ENCODE measurements at regions of chr6 and their contacts with region 1.

Region 1: DNA sequence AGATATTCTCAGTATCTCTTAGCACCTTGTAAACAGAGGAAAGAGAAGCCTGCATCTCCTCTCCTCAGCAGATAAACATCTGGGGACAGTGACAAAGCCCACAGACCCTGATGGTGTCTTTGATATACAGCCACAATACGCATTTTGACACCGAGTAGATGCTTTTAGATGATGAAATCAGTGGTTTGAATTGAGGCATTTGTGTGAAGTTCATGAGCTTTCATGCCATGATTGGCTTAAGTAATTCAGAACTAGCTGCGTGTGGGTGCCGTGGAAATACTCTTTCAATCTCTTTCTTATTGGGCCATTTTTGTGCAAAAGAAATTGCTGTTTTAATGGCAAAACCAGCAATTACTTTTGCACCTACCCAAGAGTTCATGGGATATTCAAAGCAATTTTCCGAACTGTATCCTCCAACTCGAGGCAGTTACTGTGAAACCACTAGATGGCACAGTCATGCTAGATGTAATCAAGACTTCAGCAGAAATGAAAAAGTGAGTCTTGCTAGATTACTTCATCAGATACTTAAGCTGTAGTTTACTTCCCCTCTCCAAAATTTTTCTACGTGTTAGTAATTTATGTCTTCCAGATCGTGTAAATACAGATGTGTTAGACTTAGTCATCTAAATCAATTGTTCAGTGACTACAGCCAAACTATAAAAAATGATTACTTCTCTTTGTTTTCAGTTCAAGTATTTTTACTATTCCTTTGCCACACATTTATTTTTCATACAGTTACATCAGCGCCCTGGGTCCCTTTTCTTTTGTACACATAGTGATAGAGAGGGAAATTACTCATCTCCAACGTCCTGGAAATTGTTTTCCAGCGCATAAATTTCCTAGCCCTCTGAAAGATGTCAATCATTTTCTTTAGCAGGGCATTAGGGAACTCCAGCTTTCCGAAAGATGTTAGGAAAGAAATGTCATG is 49.4 kb downstream of the IYD start:
- DNase-seq: peak; percentile 76 to 88 (median 87)
- H3K4me3 ChIP-seq: peak overlapping the region in 6 of 7 experiments; percentile 39 to 79 (median 60)
- H3K27ac ChIP-seq: peak overlapping the region in 1 of 2 experiments; percentile 50
- H3K4me1 ChIP-seq: peaks cover 2 to 10% (median 6%) of the 10 kb centered on the region in 4 experiments
- H3K27me3 ChIP-seq: peaks cover 0 to 17% (median 0%) of the 10 kb centered on the region in 5 experiments

Region 2: DNA sequence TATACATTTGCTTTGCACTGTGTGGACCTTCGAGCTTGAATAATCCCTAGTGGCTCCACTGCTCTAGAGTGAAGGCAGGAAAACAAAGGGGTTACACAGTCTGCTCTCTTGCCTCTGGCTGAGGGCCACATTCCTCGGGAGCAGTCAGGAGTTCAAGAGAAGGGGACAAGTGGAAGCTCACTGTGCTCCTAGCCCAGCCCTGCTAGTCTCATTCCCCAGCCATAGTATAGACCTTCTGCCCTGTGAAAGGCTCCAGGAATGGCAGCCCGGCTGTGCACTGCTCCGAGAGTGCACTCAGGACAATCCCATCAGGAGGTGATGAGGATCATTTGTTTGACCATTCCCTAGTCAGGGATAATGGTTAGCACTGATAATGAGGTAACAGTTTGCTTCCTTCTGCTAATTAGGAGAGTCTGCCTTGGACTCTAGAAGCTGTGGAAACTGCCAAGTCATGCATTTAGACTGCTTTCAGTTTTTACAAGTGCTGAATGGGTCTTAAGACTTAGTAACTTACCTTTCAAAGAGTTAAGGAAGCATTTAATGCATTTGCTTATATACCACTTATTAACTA is 40.9 kb before region 1 on chr6:
- CTCF ChIA-PET with region 1: no interaction called
- POLR2A ChIA-PET with region 1: no interaction called
- DNase-seq: peak; percentile 30 to 76 (median 68)
- H3K4me3 ChIP-seq: no peak overlapping the region
- H3K27ac ChIP-seq: no peak overlapping the region
- H3K4me1 ChIP-seq: peaks cover 0 to 3% (median 0%) of the 10 kb centered on the region in 4 experiments
- H3K27me3 ChIP-seq: peaks cover 0 to 3% (median 0%) of the 10 kb centered on the region in 5 experiments

Region 3: GRCh38 chr6:150443621-150444020 is 25.5 kb after region 1 on chr6:
- CTCF ChIA-PET with region 1: no interaction called
- POLR2A ChIA-PET with region 1: no interaction called
- DNase-seq: no peak
- H3K4me3 ChIP-seq: no peak overlapping the region
- H3K27ac ChIP-seq: no peak overlapping the region
- H3K4me1 ChIP-seq: no peaks in the 10 kb centered on the region
- H3K27me3 ChIP-seq: no peaks in the 10 kb centered on the region

Region 4: DNA sequence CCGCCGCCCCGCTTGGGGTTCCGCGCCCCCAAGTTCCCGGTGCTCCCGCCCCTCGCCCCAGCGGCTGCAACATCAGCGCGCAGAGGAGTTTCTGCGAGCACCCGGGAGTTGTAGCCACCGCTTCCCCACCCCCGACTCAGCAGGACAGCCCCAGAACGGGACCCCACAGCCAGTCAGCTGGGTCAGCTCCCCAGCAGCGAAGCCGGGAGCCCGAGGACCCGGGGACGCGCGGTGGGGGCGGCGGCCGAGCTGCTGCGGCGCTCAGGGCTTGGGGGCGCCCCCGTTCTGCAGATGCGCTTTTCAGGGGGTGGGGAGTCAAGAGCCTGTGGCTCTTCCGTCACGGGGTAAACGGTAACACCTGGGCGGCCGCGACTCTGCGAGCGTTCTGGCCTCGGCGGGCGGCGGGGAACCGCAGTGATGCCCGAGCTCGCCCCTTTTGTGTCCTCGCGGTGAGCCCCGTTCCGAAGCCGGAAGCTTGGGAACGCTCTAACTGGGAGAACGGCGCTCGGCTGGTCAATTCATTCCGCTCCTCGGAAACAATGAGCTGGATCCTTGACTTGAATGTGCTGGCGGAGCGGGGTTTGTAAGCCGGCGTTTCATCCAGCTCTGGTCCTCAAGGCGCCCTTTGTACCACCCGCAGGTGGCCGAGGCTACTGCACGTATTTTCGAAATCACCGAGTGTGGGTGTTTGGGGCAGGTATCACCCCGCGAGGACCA is 182.3 kb after region 1 on chr6:
- CTCF ChIA-PET with region 1: interaction called, 10 read pairs
- POLR2A ChIA-PET with region 1: no interaction called
- DNase-seq: peak; percentile 62 to 80 (median 75)
- H3K4me3 ChIP-seq: peak overlapping the region; percentile 38 to 83 (median 66)
- H3K27ac ChIP-seq: no peak overlapping the region
- H3K4me1 ChIP-seq: peaks cover 6 to 19% (median 12%) of the 10 kb centered on the region in 4 experiments
- H3K27me3 ChIP-seq: peaks cover 8 to 68% (median 32%) of the 10 kb centered on the region in 5 experiments

Region 5: DNA sequence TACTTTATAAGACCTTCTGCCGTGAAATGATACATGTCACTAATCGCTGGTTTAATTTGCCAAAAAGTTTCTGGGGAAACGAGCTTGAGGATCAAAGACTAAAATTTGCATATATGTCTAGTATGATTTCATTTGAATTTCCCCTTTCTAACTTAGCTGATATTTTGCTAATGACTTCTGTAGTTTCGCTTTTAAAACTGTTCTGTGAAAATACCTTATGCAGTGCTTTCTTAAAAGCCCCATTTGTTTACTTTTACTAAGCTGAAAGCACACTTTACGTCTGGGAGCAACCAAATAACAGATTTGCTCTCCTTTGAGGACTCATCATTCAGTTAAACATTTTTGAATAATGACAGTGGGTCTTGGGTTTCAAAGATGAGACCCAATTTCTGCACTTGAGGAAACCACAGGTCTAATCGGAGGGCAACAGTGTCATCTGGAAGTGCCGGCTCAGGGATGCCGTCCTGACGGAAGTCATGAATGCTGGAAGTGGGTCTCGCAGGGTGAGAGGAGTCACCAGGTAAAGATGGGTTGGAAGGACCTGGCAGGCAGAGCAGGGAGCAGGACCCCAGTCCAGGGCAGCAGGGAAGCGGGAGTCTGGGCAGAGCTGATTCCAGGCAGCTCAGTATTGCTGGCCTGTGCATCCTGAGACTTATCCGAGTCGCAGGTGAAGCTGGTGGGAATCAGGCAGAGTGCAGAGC is 214.8 kb after region 1 on chr6:
- CTCF ChIA-PET with region 1: no interaction called
- POLR2A ChIA-PET with region 1: no interaction called
- DNase-seq: peak; percentile 13 to 59 (median 44)
- H3K4me3 ChIP-seq: peak overlapping the region in 4 of 7 experiments; percentile 44 to 66 (median 50)
- H3K27ac ChIP-seq: peak overlapping the region in 1 of 2 experiments; percentile 27
- H3K4me1 ChIP-seq: peaks cover 4 to 25% (median 11%) of the 10 kb centered on the region in 4 experiments
- H3K27me3 ChIP-seq: no peaks in the 10 kb centered on the region

Region 6: DNA sequence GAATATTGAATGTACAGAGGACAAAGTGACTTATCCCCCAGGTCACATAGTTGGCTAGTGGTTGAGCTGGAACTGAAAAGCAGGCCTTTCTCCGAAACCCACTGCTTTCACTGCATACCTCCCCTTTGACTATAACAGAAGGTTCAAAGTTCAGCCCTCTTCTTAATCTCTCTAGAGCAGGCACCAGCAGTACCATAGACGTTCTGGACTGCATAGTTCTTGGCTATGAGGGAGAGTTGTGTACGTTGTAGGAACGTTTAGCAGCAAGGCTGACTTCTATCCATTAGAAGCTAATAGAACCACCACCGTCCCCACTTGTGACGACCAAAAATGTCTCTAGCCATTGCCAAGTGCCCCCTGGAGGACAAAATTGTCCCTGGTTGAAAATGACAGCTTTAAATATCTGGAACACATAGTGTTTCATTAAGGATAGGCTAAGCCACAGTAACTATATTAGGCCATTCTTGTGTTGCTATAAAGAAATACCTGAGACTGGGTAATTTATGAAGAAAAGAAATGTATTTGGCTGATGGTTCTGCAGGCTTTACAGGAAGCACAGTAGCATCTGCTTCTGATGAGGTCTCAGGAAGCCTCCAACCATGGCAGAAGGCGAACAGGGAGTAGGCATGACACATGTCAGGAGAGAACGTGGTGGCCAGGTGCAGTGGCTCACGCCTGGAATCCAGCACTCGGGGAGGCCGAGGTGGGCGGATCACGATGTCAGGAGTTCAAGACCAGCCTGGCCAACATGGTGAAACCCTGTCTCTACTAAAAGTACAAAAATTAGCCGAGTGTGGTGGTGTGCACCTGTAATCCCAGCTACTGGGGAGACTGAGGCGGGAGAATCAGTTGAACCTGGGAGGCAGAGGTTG is 323.7 kb after region 1 on chr6:
- CTCF ChIA-PET with region 1: interaction called, 32 read pairs
- POLR2A ChIA-PET with region 1: no interaction called
- DNase-seq: peak; percentile 48 to 75 (median 57)
- H3K4me3 ChIP-seq: no peak overlapping the region
- H3K27ac ChIP-seq: no peak overlapping the region
- H3K4me1 ChIP-seq: no peaks in the 10 kb centered on the region
- H3K27me3 ChIP-seq: no peaks in the 10 kb centered on the region

Region 7: GRCh38 chr6:150813319-150813992 is 395.3 kb after region 1 on chr6:
- CTCF ChIA-PET with region 1: interaction called, 114 read pairs
- POLR2A ChIA-PET with region 1: no interaction called
- DNase-seq: no peak
- H3K4me3 ChIP-seq: no peak overlapping the region
- H3K27ac ChIP-seq: no peak overlapping the region
- H3K4me1 ChIP-seq: no peaks in the 10 kb centered on the region
- H3K27me3 ChIP-seq: peaks cover 0 to 5% (median 0%) of the 10 kb centered on the region in 5 experiments

Measured in common myeloid progenitor, CD34-positive (primary cell).